Activated naive CD4-positive, alpha-beta T cell treated with anti-CD3 and anti-CD28 coated beads, Interleukin-2, amount 10 ng/mL, durations not matched to agents 7 days and 5 days (primary cell): ENCODE measurements at regions of chr22 and their contacts with region 1.

Region 1: GRCh38 chr22:25461301-25461700 is 103.2 kb upstream of the GRK3 start:
- DNase-seq: no peak
- H3K4me3 Mint-ChIP-seq: no peak overlapping the region
- H3K27ac Mint-ChIP-seq: no peak overlapping the region
- H3K4me1 Mint-ChIP-seq: peaks cover 14% of the 10 kb centered on the region
- H3K27me3 Mint-ChIP-seq: no peaks in the 10 kb centered on the region

Region 2: DNA sequence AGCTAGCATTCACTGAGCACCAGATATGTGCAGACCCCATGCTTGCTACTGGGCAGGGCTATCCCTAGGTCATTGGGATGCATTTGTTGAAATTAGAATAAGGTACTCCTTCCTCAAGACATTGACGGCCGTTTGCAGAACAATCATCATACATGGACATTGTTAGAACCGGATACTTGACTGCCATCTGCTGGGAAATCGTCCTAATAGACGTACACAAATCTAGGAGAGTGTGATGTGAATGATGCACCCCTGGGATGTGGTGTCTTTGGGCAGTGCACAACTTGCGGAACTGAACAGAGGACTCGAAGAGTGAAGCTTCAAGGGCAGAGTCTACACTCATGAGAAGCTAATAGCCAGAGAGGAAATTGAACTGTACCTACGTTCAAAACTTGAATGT is 316.6 kb after region 1 on chr22:
- CTCF ChIA-PET with region 1: interaction called, 35 read pairs
- DNase-seq: peak; percentile 57
- H3K4me3 Mint-ChIP-seq: no peak overlapping the region
- H3K27ac Mint-ChIP-seq: no peak overlapping the region
- H3K4me1 Mint-ChIP-seq: peaks cover 10% of the 10 kb centered on the region
- H3K27me3 Mint-ChIP-seq: peaks cover 12% of the 10 kb centered on the region